ENCODE measurements at regions of chr16 and their contacts with region 1.

Region 1: DNA sequence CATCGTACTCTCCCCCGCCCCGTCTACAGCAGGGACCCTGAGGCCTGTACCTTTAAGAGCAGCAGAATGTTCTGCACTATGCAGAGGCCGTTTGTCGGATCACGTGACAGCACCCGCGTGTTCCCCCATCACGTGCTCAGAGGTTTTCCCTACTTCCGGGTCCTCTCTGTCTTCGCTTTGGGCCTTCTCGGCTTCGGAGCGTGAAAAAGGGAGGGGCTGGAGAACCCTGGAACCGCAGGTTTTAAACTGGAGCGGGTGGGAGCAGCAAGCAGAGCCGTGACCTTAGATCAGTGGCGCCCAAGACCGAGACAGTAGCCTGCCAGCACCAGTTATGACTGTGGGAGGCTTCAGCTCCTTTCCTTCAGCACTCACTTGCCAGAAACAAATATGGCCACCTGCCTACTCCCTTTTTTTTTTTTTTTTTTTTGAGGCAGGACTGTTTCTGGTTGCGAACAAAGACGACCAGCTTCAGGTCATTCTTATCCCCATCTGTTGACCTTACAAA is at the start of gene CLN3:
- DNase-seq: peak; percentile 96
- total RNA-seq, gene CLN3: 9.1 TPM

Region 2: DNA sequence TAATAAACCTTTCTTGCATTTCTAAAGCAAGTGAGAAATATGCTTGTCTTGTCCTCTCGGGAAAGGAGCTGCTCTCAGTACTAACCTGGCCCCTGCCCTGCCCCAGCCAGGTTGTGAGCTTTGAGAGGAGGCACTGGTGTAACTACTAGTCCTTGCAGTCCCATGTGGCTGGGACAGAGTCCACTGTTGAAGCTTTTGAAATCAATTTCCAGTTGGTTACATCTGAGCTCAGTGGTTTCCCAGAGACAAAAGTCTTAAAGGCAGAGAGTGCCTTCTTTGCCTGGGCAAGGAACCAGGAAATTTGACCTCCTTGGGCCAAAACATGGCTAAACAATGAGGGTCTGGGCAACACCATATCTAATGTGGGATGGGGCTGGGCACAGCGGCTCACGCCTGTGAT is 477.2 kb before region 1 on chr16:
- intact Hi-C with region 1: no loop called
- DNase-seq: no peak

Region 3: GRCh38 chr16:28231763-28232162 is 260.3 kb before region 1 on chr16:
- intact Hi-C with region 1: no loop called
- DNase-seq: no peak

Region 4: GRCh38 chr16:28538733-28539596 is 46.9 kb after region 1 on chr16 and contains the start of gene NUPR1:
- intact Hi-C with region 1: loop called (anchors 5 kb)
- DNase-seq: peak; percentile 91
- total RNA-seq, gene NUPR1: 50.2 TPM

Region 5: DNA sequence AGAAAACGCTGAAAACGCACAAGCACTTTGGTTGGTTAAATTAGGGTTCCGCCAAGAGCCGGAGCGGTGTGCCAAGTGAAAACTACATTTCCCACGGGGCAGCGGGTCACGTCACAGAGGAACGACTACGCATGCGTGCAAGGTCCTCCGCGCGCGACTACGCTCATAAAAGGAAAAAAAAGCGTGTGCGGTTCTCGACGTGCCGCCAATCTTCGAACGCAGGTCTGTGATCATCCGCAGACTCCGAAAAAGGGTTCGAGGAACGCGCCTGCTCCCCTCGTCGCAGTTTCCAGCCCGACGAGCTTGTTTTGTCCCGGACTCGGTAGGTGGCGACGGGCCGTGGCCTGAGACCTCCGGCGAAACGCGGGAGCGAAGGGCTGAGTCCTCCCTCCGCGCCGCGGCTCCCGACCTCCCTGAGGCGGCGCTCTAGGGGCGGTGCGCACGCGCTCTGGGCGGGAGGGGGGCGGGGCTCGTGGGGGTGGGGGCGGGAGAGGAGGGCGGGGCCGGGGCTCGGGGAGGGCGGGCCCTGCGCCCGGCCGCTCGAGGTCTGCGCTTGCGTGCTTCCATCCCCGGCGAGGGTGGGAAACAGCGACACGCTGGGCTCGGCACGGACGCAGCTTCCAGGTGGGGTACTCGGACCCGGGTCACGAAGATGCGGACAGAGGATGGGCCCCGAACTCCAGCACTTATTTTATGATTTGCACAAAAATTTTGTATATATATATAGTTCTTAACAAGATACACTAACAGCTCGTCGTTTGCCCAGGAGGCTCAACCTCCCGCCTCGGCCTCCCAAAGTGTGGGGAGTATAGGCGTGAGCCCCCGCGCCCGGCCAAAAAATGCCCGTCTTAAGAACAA is 62.0 kb after region 1 on chr16 and contains the start of gene SGF29:
- intact Hi-C with region 1: loop called (anchors 2 kb)
- DNase-seq: peak; percentile 96
- total RNA-seq, gene SGF29: 14.0 TPM

Region 6: GRCh38 chr16:28617874-28618273 is 125.9 kb after region 1 on chr16:
- intact Hi-C with region 1: loop called (anchors 5 kb)
- DNase-seq: no peak

Region 7: GRCh38 chr16:28915181-28915580 is 423.2 kb after region 1 on chr16:
- intact Hi-C with region 1: no loop called
- DNase-seq: no peak

Region 8: DNA sequence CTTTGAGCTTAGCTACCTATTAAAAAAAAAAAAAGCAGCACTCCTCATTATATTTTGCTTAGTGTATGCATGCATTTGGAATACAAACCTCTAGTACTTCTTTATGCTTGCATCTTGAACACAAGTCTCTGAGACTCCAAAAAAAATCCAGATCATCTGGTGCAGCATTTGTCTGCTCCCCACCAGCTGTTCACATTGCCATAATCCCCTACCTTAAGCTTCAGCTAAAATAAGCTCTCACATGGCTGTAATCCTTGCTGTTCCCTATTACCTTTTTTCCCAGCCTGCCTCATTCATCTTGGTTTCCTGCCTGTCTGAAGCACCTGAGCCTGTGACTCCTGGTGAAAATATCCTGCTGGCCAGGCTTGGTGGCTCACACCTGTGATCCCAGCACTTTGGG is 451.3 kb after region 1 on chr16:
- intact Hi-C with region 1: loop called (anchors 10 kb)
- DNase-seq: no peak